AG04449 (cell line): ENCODE measurements at regions of chr22 and their contacts with region 1.

Region 1: DNA sequence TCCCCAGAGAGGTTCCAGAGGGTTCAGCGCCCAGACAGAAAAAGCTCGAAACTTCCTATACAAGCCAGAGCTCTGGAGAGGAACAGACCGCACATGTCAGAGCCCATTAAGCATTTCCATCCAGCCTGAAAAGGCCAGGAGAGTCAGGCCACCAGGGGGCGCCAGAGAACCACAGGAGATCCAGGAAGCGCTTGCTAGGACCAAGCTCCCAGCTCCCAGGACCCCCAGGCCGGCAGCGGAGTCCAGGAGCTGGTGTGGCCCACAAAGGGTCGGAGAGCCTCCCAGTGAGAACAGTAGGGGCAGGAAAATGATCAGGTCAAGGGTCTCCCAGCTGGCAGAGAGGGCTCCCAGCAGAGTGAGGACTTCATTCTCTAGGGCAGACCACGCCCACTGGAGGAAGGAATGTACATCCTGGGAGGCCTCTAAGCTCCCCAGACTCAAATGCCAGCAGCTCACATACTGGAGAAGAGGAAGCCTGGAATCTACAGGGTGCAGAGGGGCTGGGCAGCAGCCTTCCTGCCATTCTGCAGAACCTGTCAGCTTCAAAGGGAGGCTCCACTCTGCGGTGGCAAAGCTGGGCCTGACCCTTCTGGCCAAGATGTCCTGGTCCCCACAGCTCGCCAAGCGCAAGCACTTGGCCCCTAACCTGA is 2.1 kb upstream of the MEI1 start:
- DNase-seq: peak; percentile 31
- H3K4me3 ChIP-seq: peak overlapping the region; percentile 9; the same call in 1 of the 2 replicates
- CTCF ChIP-seq: peak; percentile 93

Region 2: GRCh38 chr22:41656556-41656955 is 40.7 kb before region 1 on chr22:
- CTCF ChIA-PET with region 1: interaction called, 17 read pairs
- POLR2A ChIA-PET with region 1: no interaction called
- DNase-seq: no peak
- H3K4me3 ChIP-seq: no peak overlapping the region
- CTCF ChIP-seq: no peak

Region 3: GRCh38 chr22:41713004-41713403 is 15.8 kb after region 1 on chr22:
- CTCF ChIA-PET with region 1: interaction called, 56 read pairs
- POLR2A ChIA-PET with region 1: no interaction called
- DNase-seq: no peak
- H3K4me3 ChIP-seq: no peak overlapping the region
- CTCF ChIP-seq: no peak

Region 4: GRCh38 chr22:41780746-41781505 is 83.7 kb after region 1 on chr22:
- CTCF ChIA-PET with region 1: interaction called, 21 read pairs
- POLR2A ChIA-PET with region 1: no interaction called
- DNase-seq: no peak
- H3K4me3 ChIP-seq: no peak overlapping the region
- CTCF ChIP-seq: no peak

Region 5: GRCh38 chr22:41857155-41857859 is 160.1 kb after region 1 on chr22:
- CTCF ChIA-PET with region 1: interaction called, 44 read pairs
- POLR2A ChIA-PET with region 1: no interaction called
- DNase-seq: no peak
- H3K4me3 ChIP-seq: no peak overlapping the region
- CTCF ChIP-seq: peak; percentile 51

Region 6: GRCh38 chr22:41946629-41947423 is 249.6 kb after region 1 on chr22 and contains the start of gene CENPM:
- CTCF ChIA-PET with region 1: interaction called, 387 read pairs
- POLR2A ChIA-PET with region 1: no interaction called
- DNase-seq: no peak
- H3K4me3 ChIP-seq: peak within 1 kb of the TSS; percentile 88
- CTCF ChIP-seq: no peak